ENCODE measurements at regions of chr4 and their contacts with region 1.

Region 1: DNA sequence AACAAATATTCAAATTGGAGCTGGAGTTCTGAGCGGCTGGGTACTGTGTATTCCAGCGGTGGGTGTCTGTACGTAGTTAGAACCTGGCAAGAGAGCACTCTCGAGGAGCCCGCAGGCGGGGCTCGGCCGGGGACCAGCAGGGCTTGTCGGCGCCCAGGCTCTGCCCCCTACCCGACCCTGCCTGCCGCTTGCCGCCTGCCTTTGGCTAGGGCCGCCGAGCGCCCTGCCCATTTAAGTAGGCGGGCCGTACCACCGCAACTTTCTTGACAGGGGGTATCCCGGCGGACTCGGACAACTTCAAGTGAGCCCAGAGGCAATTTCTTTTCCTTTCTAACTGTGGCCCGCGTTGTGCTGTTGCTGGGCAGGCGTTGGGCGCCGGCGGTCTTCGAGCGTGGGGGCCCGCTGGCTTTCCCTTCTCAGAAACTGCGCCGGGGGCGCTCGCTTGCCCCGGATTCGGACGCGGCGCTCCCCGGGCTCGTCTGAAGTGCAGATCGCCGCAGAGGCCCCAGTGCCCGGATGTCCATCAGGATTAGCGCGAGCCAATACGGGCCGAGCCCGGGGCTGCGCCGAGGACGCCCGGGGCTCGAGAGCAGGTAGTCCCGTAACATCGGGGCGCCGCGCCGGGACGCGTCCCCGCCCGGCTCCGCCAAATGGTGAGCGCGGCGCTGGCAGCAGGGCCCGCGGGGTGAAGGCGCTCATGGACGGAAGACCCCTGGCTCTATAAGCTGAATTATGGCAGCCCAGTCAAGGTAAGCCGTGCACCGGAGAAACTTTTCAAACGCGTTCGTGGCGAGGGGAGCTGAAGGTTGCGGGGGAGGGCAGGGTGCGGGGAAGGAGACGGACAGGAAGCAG is 72.1 kb downstream of the AFF1 start:
- DNase-seq: peak; percentile 85 to 92 (median 89)
- ATAC-seq: peak; percentile 88
- H3K4me3 ChIP-seq: peak overlapping the region; percentile 85
- H3K4me3 Mint-ChIP-seq: peak overlapping the region; percentile 87 to 100 (median 93)
- H3K27ac ChIP-seq: peak overlapping the region; percentile 91
- H3K27ac Mint-ChIP-seq: peak overlapping the region; percentile 95 to 99 (median 98)
- H3K4me1 ChIP-seq: peaks cover 25 to 28% of the 10 kb centered on the region in 2 donors
- H3K4me1 Mint-ChIP-seq: peaks cover 39 to 72% (median 59%) of the 10 kb centered on the region in 7 donors
- H3K27me3 ChIP-seq: no peaks in the 10 kb centered on the region
- H3K27me3 Mint-ChIP-seq: no peaks in the 10 kb centered on the region

Region 2: DNA sequence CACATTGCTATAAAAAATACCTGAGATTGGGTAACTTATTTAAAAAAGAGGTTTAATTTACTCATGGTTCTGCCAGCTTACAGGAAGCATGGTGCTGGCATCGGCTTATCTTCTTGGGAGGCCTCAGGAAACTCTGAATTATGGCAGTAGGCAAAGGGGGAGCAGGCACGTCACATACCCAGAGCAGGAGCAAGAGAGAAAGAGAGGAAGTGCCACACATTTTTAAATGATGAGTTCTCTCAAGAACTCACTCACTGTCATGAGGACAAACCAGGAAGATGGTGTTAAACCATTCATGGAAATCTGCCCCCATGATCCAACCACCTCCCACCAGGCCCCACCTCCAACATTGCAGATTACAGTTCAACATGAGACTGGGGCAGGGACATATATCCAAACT is 82.1 kb before region 1 on chr4:
- CTCF ChIA-PET with region 1: interaction called, 23 read pairs
- POLR2A ChIA-PET with region 1: interaction called, 15 read pairs
- intact Hi-C with region 1: loop called (anchors 1 kb)
- DNase-seq: no peak
- ATAC-seq: no peak
- H3K4me3 ChIP-seq: no peak overlapping the region
- H3K4me3 Mint-ChIP-seq: no peak overlapping the region
- H3K27ac ChIP-seq: no peak overlapping the region
- H3K27ac Mint-ChIP-seq: peak overlapping the region in 3 of 9 donors; percentile 8 to 50 (median 32)
- H3K4me1 ChIP-seq: no peaks in the 10 kb centered on the region
- H3K4me1 Mint-ChIP-seq: peaks cover 0 to 25% (median 5%) of the 10 kb centered on the region in 7 donors
- H3K27me3 ChIP-seq: no peaks in the 10 kb centered on the region
- H3K27me3 Mint-ChIP-seq: no peaks in the 10 kb centered on the region

Region 3: DNA sequence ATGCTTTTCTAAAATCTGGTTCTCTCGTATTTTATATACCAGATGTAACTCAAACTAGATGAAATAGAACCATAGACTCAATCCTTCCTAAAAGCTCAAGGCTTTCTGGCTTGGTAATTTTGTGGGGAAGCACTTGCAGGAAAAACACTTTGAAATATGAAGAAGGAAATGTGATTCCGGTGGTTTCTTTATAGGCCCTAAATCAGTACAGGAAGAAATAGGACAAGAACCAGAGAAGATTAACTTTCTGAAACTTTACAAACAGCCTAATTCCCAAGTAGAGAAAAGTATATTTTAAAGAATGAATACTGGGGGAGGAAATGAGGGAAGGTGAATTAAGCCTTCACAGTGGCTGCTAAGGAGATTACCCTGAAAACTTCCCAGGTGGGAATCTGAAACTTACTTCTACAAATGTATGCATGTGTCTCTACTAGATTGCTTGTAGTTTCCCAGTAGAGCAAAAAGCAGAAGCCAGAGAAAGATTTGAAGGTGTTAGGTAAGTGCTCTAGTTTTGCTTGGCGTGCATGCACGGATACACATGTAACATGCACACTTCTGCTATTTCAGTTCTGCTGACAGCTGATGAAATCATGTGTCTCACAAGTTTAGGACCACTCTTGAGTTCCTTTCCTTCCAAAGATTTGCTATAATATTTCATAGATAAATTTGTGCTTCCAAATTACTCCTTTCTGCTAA is 20.0 kb after region 1 on chr4:
- CTCF ChIA-PET with region 1: no interaction called
- POLR2A ChIA-PET with region 1: interaction called, 8 read pairs
- intact Hi-C with region 1: loop called (anchors 2 kb)
- DNase-seq: no peak
- ATAC-seq: peak; percentile 69
- H3K4me3 ChIP-seq: no peak overlapping the region
- H3K4me3 Mint-ChIP-seq: peak overlapping the region in 4 of 10 donors; percentile 2 to 37 (median 24)
- H3K27ac ChIP-seq: no peak overlapping the region
- H3K27ac Mint-ChIP-seq: peak overlapping the region in 5 of 9 donors; percentile 2 to 81 (median 26)
- H3K4me1 ChIP-seq: peaks cover 0 to 21% of the 10 kb centered on the region in 2 donors
- H3K4me1 Mint-ChIP-seq: peaks cover 23 to 43% (median 39%) of the 10 kb centered on the region in 7 donors
- H3K27me3 ChIP-seq: no peaks in the 10 kb centered on the region
- H3K27me3 Mint-ChIP-seq: no peaks in the 10 kb centered on the region

Region 4: DNA sequence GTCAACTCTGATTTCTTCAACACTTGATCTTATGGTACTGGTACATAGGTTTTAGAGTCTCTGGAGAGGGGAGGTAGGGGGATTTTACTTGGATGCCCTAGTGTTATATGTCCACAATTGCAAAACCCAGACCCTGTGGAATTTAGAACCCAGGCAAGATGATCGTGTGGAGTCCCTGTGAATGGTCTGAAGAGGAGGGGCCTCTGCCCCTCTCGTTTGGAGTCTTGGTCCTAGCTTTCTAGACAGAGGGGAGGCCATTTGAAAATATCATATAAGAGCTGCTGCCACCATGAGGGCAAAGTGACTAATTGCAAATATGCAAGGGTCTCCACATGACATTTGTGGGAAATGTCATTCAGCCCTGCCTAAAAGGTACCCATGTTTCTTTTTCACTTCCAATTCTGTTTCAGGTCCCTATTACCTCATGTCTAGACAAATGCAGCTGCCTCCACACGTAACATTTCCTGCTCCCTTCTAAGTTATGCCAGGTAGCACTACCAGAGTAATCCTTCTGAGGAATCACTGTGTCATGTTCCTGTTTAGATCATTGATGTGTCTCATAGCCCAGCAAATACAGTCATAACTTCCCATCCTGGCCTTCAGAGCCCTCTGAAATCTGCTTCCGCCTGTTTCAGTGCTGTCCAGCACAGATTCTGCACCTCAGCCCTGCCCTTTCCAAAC is 86.7 kb after region 1 on chr4:
- CTCF ChIA-PET with region 1: interaction called, 16 read pairs
- POLR2A ChIA-PET with region 1: interaction called, 6 read pairs
- intact Hi-C with region 1: loop called (anchors 1 kb)
- DNase-seq: peak in 7 of 9 donors; percentile 26 to 60 (median 51)
- ATAC-seq: peak; percentile 90
- H3K4me3 ChIP-seq: no peak overlapping the region
- H3K4me3 Mint-ChIP-seq: no peak overlapping the region
- H3K27ac ChIP-seq: no peak overlapping the region
- H3K27ac Mint-ChIP-seq: peak overlapping the region; percentile 26 to 91 (median 74)
- H3K4me1 ChIP-seq: no peaks in the 10 kb centered on the region
- H3K4me1 Mint-ChIP-seq: peaks cover 10 to 47% (median 25%) of the 10 kb centered on the region in 7 donors
- H3K27me3 ChIP-seq: no peaks in the 10 kb centered on the region
- H3K27me3 Mint-ChIP-seq: no peaks in the 10 kb centered on the region

Region 5: DNA sequence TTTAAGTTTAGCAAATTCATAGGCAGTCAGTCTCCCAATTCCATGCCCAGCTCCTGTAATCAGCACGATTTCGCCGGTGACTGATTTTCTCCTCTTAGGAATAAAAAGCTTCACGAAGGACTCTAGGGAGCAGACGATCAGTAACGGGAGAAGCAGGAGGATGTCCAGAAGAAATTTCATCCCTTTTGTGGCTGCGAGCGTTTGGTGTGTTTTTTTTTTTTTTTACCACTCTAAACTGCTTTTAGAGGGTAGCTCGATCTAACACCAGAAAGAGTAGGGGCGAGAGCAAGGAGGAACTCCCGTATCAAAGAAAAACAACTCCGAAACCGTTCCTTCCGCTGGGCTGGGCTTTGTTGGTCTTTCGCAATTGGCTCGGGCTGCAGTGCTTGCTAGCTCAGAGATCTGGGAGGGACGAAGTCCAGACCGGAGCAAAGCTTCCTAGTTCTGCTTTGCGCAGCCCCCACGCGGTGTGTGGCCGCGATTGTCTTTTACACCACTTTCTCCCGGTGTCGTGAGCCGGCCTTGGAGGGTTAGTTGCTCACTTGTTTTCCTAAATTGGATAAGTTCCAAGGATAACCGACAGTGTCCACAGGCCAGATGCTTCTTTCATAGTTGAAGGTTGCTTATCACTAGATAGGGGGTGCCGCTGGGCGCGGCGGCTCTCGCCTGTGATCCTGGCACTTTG is 384.1 kb after region 1 on chr4 and contains the start of gene HSD17B11:
- CTCF ChIA-PET with region 1: interaction called, 4 read pairs
- POLR2A ChIA-PET with region 1: interaction called, 8 read pairs
- intact Hi-C with region 1: loop called in 1 of 2 experiments (anchors 1 kb)
- DNase-seq: peak; percentile 44 to 83 (median 79)
- ATAC-seq: peak; percentile 99
- H3K4me3 ChIP-seq: peak within 1 kb of the TSS; percentile 85
- H3K4me3 Mint-ChIP-seq: peak within 1 kb of the TSS; percentile 87 to 99 (median 97)
- H3K27ac ChIP-seq: peak within 1 kb of the TSS; percentile 82
- H3K27ac Mint-ChIP-seq: peak within 1 kb of the TSS; percentile 83 to 96 (median 94)
- H3K4me1 ChIP-seq: peaks cover 10 to 17% of the 10 kb centered on the region in 2 donors
- H3K4me1 Mint-ChIP-seq: peaks cover 32 to 66% (median 57%) of the 10 kb centered on the region in 7 donors
- H3K27me3 ChIP-seq: no peaks in the 10 kb centered on the region
- H3K27me3 Mint-ChIP-seq: peaks cover 0 to 14% (median 0%) of the 10 kb centered on the region in 5 donors
- total RNA-seq, gene HSD17B11: 34.3 to 74.4 (median 61.0) TPM

Region 6: DNA sequence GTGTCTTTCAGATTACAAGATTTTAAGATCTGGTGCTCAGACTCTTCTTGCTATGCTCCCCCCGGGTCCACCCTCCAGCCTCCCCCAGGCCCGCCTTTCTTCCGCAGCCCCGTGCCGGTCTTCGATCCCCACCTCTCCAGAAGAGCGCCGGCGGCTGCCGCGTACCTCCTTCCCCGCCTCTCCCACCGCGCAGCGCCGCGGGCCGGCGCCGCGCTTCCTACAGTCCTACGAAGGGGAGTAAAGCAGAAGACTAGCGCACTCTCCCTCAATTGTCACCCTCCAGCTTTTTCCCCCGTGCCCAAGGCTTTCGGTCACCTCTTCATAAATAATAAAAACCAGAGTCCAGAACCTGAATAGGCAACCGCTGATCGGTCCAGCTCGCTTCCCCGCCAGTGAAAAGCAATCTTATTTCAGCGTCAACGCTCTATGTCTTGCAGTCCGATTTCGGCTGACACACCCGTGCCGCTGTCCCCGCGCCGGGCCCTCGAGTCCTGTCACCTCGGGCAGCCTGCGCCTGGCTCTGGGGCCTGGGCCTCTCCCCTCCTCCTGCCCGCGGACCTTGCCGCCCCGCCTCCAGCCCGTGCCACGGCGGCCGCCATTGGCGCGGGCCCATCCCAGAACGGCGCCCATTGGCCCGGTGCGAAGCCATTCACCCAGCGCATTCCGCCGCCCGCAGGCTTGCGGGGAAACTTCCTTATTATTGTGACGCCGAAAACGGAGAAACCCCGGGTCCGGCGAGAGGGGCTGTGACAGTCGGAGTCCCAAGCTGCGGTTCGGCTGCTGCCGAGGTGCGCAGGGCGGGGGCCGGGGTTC is 1585.1 kb after region 1 on chr4 and contains the start of gene HERC3:
- CTCF ChIA-PET with region 1: no interaction called
- POLR2A ChIA-PET with region 1: no interaction called
- intact Hi-C with region 1: loop called in 1 of 2 experiments (anchors 5 kb)
- DNase-seq: peak; percentile 87 to 92 (median 91)
- ATAC-seq: peak; percentile 94
- H3K4me3 ChIP-seq: peak within 1 kb of the TSS; percentile 60
- H3K4me3 Mint-ChIP-seq: peak within 1 kb of the TSS; percentile 94 to 100 (median 98)
- H3K27ac ChIP-seq: peak within 1 kb of the TSS; percentile 93
- H3K27ac Mint-ChIP-seq: peak within 1 kb of the TSS; percentile 83 to 99 (median 97)
- H3K4me1 ChIP-seq: peaks cover 10 to 20% of the 10 kb centered on the region in 2 donors
- H3K4me1 Mint-ChIP-seq: peaks cover 34 to 58% (median 49%) of the 10 kb centered on the region in 7 donors
- H3K27me3 ChIP-seq: no peaks in the 10 kb centered on the region
- H3K27me3 Mint-ChIP-seq: peaks cover 0 to 31% (median 0%) of the 10 kb centered on the region in 5 donors
- total RNA-seq, gene HERC3: 38.1 to 130 (median 104) TPM